ENCODE measurements at regions of chr12 and their contacts with region 1.

Region 1: GRCh38 chr12:115752913-115753726 is 524.4 kb downstream of the MED13L start:
- DNase-seq: no peak
- ATAC-seq: peak; percentile 91

Region 2: GRCh38 chr12:115528466-115528865 is 224.7 kb before region 1 on chr12:
- intact Hi-C with region 1: no loop called
- DNase-seq: no peak
- ATAC-seq: no peak

Region 3: DNA sequence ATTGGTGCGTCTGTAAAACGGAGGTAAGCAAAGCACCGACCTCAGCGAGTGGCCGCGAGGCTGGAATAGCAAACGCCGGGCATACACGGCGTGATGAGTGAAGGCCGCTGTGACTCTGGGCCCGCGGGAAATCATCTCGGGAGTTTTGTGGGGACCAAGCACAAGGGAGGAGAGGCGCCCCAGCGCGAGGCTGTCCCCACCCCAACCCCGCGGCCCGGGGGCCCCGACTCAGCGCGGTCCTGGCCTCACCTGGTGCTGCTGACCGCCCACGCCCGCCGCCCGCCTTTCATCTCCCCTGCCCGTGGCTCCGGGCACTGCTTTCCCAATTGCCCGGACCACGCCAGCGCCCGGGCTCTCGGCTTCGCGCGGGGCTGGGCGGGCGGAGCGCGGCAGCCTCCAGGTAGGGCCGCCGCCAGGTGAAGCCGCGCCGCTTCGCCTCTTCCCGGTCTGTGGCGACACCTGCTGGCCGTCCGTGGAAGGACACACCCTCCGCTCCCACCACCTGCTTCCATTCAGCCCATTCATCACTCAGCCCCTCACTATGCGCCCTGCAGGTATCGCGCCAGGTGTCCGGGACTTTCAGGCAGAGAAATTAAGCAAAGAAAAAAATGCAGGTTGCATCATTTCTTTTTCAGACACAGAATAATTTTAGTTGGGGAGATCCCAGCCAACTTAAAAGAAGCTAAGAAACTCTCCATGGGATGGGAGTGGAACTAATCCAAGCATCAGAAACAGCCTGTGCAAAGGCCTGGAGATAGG is 164.0 kb after region 1 on chr12:
- intact Hi-C with region 1: loop called (anchors 10 kb)
- DNase-seq: peak; percentile 72
- ATAC-seq: peak; percentile 82

Region 4: DNA sequence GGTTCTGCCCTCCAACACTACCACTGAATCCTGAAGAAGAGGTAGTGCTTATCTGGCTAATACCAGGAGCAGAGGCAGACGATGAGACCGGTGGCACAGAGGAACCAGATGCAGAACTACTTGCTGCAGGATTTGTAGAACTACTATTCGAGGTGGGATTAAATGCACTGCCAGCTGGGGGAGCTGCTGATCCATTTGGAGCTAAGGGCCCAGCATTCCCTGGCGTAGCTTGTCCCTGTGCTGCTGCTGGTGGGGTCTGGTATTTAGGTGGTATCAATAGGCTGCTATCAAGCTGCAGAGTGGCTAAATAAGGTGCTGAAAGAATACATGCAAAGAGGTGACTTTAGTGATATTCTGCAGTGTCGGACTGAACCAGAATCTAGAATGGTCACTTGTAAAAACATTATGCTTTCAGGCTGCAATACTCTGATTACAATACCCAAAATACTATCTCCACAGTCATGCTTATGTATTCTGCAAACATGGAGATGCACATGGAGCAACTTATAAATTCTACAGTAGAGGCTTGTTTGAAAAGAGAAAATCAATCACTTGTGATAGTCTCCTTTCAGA is 230.2 kb after region 1 on chr12:
- intact Hi-C with region 1: no loop called
- DNase-seq: no peak
- ATAC-seq: no peak